Activated B cell treated with CpG ODN at 0.5 μM for 24 hours (primary cell): ENCODE measurements at regions of chr2 and their contacts with region 1.

Region 1: DNA sequence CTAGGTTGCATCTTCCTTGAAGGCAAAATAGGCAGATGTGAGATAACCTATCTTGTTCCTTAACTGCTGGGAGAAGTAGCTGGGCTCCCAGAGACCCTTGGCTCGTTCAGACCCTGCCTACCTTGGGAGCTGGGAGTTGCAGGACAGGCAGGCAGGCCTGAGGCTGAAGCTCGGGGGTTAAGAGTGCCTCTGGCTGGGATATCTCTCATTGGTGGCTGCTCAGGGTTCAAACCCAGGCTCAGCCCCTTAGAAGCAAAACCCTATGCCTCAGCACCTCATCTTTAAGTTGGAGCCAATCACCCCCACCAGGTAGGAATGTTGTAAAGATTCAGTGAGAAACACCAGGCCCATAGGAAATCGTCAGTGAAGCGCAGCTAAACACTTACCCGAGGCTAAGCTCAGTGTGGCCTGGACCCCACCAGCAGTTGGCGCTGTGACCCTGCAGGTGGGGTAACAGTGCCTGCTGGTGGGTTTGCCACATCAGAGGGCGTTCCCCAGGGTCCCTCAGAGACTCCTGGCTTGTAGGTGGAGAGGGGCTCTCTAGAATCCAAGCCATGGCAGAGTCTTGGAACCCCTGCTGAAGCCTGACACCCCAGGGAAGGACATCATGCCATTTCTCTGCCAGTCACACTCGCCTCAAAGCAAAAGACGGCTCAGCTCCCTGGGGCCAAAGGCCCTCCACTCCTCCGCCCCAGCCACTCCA is 54.6 kb upstream of the GPR17 start:
- DNase-seq: peak; percentile 72
- ATAC-seq: peak; percentile 99
- H3K4me3 Mint-ChIP-seq: no peak overlapping the region
- H3K27ac Mint-ChIP-seq: no peak overlapping the region
- H3K4me1 Mint-ChIP-seq: peaks cover 31% of the 10 kb centered on the region
- H3K27me3 Mint-ChIP-seq: no peaks in the 10 kb centered on the region
- CTCF ChIP-seq: no peak

Region 2: GRCh38 chr2:127619877-127620705 is 28.7 kb after region 1 on chr2:
- CTCF ChIA-PET with region 1: interaction called, 15 read pairs
- POLR2A ChIA-PET with region 1: no interaction called
- intact Hi-C with region 1: no loop called
- DNase-seq: peak; percentile 21
- ATAC-seq: peak; percentile 56
- H3K4me3 Mint-ChIP-seq: peak overlapping the region; percentile 70
- H3K27ac Mint-ChIP-seq: peak overlapping the region; percentile 76
- H3K4me1 Mint-ChIP-seq: peaks cover 82% of the 10 kb centered on the region
- H3K27me3 Mint-ChIP-seq: no peaks in the 10 kb centered on the region
- CTCF ChIP-seq: no peak

Region 3: GRCh38 chr2:127644066-127645025 is 53.0 kb after region 1 on chr2:
- CTCF ChIA-PET with region 1: interaction called, 289 read pairs
- POLR2A ChIA-PET with region 1: interaction called, 34 read pairs
- intact Hi-C with region 1: loop called (anchors 1 kb)
- DNase-seq: no peak
- ATAC-seq: no peak
- H3K4me3 Mint-ChIP-seq: no peak overlapping the region
- H3K27ac Mint-ChIP-seq: peak overlapping the region; percentile 70
- H3K4me1 Mint-ChIP-seq: peaks cover 55% of the 10 kb centered on the region
- H3K27me3 Mint-ChIP-seq: no peaks in the 10 kb centered on the region
- CTCF ChIP-seq: no peak

Region 4: GRCh38 chr2:127695491-127696472 is 104.4 kb after region 1 on chr2:
- CTCF ChIA-PET with region 1: interaction called, 7 read pairs
- POLR2A ChIA-PET with region 1: interaction called, 15 read pairs
- intact Hi-C with region 1: loop called (anchors 1 kb)
- DNase-seq: no peak
- ATAC-seq: peak; percentile 41
- H3K4me3 Mint-ChIP-seq: no peak overlapping the region
- H3K27ac Mint-ChIP-seq: no peak overlapping the region
- H3K4me1 Mint-ChIP-seq: peaks cover 7% of the 10 kb centered on the region
- H3K27me3 Mint-ChIP-seq: no peaks in the 10 kb centered on the region
- CTCF ChIP-seq: no peak

Region 5: GRCh38 chr2:127810619-127811396 is 219.4 kb after region 1 on chr2 and contains the start of gene WDR33:
- CTCF ChIA-PET with region 1: interaction called, 10 read pairs
- POLR2A ChIA-PET with region 1: no interaction called
- intact Hi-C with region 1: loop called (anchors 1 kb)
- DNase-seq: peak; percentile 88
- ATAC-seq: peak; percentile 96
- H3K4me3 Mint-ChIP-seq: peak within 1 kb of the TSS; percentile 89
- H3K27ac Mint-ChIP-seq: peak within 1 kb of the TSS; percentile 99
- H3K4me1 Mint-ChIP-seq: peaks cover 56% of the 10 kb centered on the region
- H3K27me3 Mint-ChIP-seq: no peaks in the 10 kb centered on the region
- CTCF ChIP-seq: no peak
- total RNA-seq, gene WDR33: 83.0 and 93.0 TPM in 2 replicates

Region 6: GRCh38 chr2:128232965-128233789 is 641.8 kb after region 1 on chr2:
- CTCF ChIA-PET with region 1: no interaction called
- POLR2A ChIA-PET with region 1: no interaction called
- intact Hi-C with region 1: loop called (anchors 1 kb)
- DNase-seq: peak; percentile 77
- ATAC-seq: peak; percentile 98
- H3K4me3 Mint-ChIP-seq: peak overlapping the region; percentile 82
- H3K27ac Mint-ChIP-seq: no peak overlapping the region
- H3K4me1 Mint-ChIP-seq: peaks cover 5% of the 10 kb centered on the region
- H3K27me3 Mint-ChIP-seq: peaks cover 8% of the 10 kb centered on the region
- CTCF ChIP-seq: peak; percentile 72